ENCODE measurements at regions of chr1 and their contacts with region 1.

Region 1: DNA sequence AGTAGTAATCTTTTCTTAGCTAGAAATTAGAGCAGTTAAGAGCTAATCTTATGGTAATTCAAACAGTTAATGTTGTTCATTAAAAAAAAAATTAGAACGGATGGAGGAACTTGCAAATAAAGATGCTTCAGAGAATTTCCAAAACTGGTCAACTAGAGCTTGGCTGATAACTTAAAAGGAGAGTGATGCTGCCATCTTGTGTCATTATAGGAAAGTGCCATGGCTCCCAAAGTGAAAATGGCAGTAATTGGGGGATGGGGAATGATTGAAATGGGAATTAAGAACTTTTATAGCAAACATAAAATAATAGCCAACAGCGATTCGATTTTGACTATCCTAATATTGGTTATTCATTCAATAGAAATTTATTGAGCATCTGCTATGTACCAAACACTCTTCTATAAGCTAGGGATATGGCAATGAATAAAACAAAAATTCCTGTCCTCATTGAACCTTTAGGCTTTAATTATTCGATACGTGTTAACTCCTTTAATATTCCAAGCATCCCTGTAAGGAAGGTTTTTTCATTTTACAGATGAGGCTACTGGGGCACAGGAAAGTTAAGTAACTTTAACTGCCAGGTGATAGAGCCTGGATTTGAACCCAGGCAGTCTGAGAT is 5.7 kb upstream of the PLPP3 start:
- DNase-seq: no peak
- H3K4me3 ChIP-seq: no peak overlapping the region
- CTCF ChIP-seq: peak in 1 of 3 donors; percentile 86
- POLR2A ChIP-seq: no peak

Region 2: DNA sequence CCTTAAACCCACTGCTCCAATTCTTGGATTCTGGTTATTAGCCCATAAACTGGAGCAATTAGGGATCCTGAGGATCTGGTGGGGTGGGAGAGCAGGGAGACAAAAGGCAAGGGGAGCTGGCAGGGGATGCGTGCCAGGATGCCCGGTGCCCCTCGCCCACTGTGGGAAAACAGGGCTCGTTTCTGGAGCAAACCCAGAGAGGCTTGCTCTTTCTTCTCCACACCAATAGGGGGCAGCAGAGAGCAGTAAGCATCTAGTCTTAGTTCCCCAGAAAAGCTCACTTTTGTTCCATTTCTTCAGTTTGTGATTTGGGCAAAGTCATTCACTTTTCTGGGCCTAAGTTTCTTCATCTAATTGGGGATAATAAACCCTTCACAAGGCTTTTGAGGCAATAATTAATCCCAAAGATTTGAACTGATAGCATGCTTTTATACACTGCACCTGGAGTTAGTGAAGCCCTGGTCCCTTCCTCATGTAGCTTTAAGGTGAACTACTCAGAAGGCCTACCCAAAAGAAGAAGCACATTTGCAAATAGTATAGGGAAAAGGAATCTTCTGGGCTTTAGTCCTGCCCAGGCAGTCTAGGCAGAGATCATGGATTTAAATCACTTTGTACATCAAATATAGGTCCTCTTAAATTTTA is 1209.3 kb before region 1 on chr1:
- intact Hi-C with region 1: loop called (anchors 5 kb)
- DNase-seq: no peak
- H3K4me3 ChIP-seq: no peak overlapping the region
- CTCF ChIP-seq: no peak
- POLR2A ChIP-seq: no peak